Common myeloid progenitor, CD34-positive (primary cell): ENCODE measurements at regions of chr7 and their contacts with region 1.

Region 1: DNA sequence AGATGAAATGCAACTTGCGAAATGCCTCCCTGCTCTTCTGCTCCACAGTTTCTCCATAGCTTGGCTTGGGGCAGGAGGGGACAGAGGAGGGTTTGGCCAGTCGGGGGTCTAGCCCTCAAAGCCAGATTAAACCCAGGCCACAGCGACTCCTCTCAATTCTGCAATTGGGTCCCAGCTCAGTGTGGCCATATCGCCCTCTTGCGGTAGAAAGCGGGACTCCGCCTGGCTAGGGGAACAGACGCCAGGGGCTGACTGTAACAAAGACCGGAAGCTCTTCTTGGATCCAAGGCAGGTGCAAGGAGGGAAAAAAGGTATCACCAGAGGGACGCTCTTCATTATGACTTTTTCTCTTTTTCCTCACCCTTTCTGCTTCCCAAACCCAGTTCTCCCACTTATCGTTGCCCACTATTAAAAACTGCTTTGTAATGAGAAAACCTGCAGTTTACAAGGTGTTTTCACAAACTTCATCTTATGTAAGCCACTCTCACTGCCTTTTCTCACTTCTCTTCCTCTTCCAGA is 36.6 kb upstream of the TNPO3 start:
- DNase-seq: peak; percentile 66 to 82 (median 78)
- H3K4me3 ChIP-seq: no peak overlapping the region
- H3K27ac ChIP-seq: no peak overlapping the region
- H3K4me1 ChIP-seq: peaks cover 0 to 16% (median 4%) of the 10 kb centered on the region in 4 experiments
- H3K27me3 ChIP-seq: no peaks in the 10 kb centered on the region

Region 2: GRCh38 chr7:129009437-129009836 is 82.1 kb before region 1 on chr7:
- CTCF ChIA-PET with region 1: interaction called, 20 read pairs
- POLR2A ChIA-PET with region 1: no interaction called
- DNase-seq: peak; percentile 13 to 81 (median 66)
- H3K4me3 ChIP-seq: no peak overlapping the region
- H3K27ac ChIP-seq: peak overlapping the region in 1 of 2 experiments; percentile 9
- H3K4me1 ChIP-seq: peaks cover 2 to 13% (median 6%) of the 10 kb centered on the region in 4 experiments
- H3K27me3 ChIP-seq: no peaks in the 10 kb centered on the region

Region 3: GRCh38 chr7:129054438-129055293 is 36.9 kb before region 1 on chr7 and contains the start of gene TNPO3:
- CTCF ChIA-PET with region 1: interaction called, 31 read pairs
- POLR2A ChIA-PET with region 1: no interaction called
- DNase-seq: peak; percentile 91 to 95 (median 93)
- H3K4me3 ChIP-seq: peak within 1 kb of the TSS; percentile 75 to 99 (median 94)
- H3K27ac ChIP-seq: peak within 1 kb of the TSS; percentile 100
- H3K4me1 ChIP-seq: peaks cover 13 to 26% (median 16%) of the 10 kb centered on the region in 4 experiments
- H3K27me3 ChIP-seq: peaks cover 0 to 1% (median 0%) of the 10 kb centered on the region in 5 experiments

Region 4: DNA sequence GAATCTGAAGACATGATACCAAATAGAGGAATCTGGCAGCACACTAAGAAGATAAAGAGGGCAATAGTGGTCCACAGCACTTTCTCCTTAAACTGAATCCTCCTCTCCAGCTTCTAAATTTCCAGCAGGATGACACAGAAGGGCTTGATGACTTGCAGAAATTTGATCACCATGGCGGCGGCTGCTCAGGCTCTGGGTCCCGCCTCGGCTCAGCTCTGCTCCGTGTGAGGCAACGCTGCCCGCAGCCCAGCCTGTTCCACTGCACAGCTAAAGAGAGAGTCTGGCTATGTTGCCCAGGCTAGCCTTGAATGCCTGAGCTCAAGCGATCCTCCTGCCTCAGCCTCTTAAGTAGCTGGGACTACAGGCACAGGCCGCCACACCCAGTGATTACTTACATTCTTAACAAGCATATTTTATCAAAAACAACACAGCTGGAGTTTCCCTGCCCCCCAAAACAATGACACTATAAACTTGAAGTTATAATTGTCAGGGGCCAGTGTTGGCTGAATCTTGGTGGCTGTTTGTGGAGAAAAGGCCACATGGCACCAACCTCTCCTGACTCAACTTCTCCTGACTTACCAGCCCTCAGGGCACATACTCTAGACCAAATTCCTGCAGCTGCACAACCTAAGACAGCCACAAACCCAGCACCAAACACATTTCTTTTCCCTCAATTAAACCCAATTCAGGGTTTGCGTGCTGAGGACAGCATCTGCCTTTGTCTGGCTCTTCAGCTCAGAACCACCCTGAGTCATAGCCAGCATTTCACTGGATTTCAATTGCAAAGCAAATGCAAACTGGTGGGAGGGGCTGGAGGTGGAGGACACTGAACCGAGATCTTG is 25.0 kb before region 1 on chr7:
- CTCF ChIA-PET with region 1: interaction called, 11 read pairs
- POLR2A ChIA-PET with region 1: no interaction called
- DNase-seq: peak in 1 of 3 donors; percentile 26
- H3K4me3 ChIP-seq: no peak overlapping the region
- H3K27ac ChIP-seq: peak overlapping the region in 1 of 2 experiments; percentile 75
- H3K4me1 ChIP-seq: peaks cover 4 to 31% (median 12%) of the 10 kb centered on the region in 4 experiments
- H3K27me3 ChIP-seq: peaks cover 0 to 2% (median 0%) of the 10 kb centered on the region in 5 experiments

Region 5: DNA sequence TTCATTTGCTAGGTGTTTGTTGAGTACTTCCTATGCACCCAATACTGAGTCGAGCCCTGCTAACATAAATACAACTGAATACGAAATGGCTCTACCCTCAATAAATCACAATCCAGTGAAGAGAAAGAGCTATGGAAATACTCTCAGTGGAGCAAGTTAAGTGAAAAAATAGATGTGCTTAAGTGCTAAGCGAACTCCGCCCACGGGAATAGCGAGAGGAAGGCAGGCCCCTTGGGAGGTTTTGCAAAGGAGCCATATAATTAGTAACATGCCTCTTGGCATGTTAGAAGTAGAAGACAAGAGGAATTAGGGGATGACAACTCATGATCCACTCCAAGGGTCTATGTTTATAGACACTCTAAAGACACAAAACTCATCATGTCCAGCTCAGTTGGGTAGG is 10.2 kb after region 1 on chr7:
- CTCF ChIA-PET with region 1: interaction called, 14 read pairs
- POLR2A ChIA-PET with region 1: no interaction called
- DNase-seq: no peak
- H3K4me3 ChIP-seq: no peak overlapping the region
- H3K27ac ChIP-seq: no peak overlapping the region
- H3K4me1 ChIP-seq: no peaks in the 10 kb centered on the region
- H3K27me3 ChIP-seq: no peaks in the 10 kb centered on the region